IMR-90 (cell line): ENCODE measurements at regions of chr1 and their contacts with region 1.

Region 1: DNA sequence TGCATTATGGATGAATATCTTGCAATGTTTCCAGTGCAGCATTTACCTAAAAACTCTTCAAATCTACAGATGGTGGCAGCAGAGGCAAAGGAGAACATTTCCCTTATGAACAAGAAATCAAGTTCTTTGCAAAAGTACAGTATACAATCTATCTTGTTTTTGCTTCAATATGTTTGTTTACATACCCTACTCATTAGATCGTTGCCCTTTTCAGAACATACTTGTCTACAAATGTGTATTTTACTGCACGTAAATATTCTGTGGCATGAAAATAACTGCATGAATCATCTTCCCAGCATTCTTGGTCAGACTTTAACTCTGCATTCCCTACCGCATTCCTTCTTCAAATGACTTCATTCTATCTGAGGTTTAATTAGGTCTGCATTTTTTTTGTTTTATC is 212.7 kb downstream of the ZP4 start:
- DNase-seq: peak; percentile 83
- ATAC-seq: peak; percentile 92
- H3K4me3 ChIP-seq: no peak overlapping the region
- H3K27ac ChIP-seq: no peak overlapping the region
- H3K4me1 ChIP-seq: peaks cover 4% of the 10 kb centered on the region
- H3K27me3 ChIP-seq: no peaks in the 10 kb centered on the region
- CTCF ChIP-seq: peak; percentile 52
- POLR2A ChIP-seq: no peak
- RAD21 ChIP-seq: peak; percentile 53

Region 2: DNA sequence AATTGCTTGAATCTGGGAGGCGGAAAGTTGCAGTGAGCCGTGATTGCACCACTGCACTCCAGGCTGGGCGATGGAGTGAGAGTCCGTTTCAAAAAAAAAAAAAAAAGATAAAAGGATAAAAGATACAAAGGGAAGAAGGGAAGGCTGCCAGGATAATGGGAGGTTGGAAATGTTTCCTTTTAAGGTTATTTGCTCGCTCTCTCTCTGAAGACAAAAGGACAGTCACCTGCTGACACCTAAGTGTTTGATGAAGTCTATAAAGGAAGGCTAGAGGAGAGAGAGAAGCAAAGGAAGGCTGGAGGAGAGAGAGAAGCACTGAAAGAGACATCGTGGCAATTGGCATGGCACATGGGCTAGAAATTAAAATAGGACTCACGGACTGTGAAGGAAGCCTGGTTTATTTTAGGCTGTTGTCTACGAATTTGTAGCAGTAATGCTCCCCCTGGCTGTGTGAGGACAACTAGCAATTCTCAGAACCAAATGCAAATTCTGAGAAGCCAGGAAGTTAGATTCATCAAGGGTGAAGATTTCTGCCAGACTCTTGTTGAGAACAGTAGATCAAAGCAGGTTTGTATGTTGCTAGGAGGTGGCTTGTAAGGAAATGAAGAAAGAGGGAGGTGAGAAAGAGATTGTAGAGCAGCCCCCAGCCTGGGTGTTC is 58.5 kb after region 1 on chr1:
- CTCF ChIA-PET with region 1: no interaction called
- POLR2A ChIA-PET with region 1: no interaction called
- dilution Hi-C with region 1: no loop called
- in situ Hi-C with region 1: no loop called
- intact Hi-C with region 1: loop called (anchors 1 kb)
- DNase-seq: peak; percentile 1
- ATAC-seq: no peak
- H3K4me3 ChIP-seq: no peak overlapping the region
- H3K27ac ChIP-seq: no peak overlapping the region
- H3K4me1 ChIP-seq: no peaks in the 10 kb centered on the region
- H3K27me3 ChIP-seq: no peaks in the 10 kb centered on the region
- CTCF ChIP-seq: no peak
- POLR2A ChIP-seq: no peak
- RAD21 ChIP-seq: no peak

Region 3: DNA sequence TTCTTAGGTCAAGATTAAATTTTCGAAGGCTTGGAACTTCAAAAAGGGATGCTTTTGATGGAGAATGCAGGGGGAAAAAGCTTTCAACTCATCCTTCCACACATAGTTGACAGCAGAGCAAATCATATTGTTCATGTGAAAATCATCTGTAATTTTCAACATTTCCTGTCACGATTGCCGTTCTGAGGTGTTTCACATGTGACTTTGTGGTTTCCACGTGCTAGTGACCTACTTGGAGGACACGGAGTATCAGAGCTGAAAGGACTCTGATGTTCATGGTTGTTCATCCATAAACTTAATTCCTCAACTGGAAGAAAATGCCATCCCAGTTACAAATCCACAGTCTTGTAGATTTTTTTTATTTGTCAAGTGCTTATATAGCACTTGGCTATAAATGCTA is 133.7 kb after region 1 on chr1:
- CTCF ChIA-PET with region 1: interaction called, 7 read pairs
- POLR2A ChIA-PET with region 1: no interaction called
- dilution Hi-C with region 1: no loop called
- in situ Hi-C with region 1: no loop called
- intact Hi-C with region 1: loop called (anchors 1 kb)
- DNase-seq: no peak
- ATAC-seq: no peak
- H3K4me3 ChIP-seq: no peak overlapping the region
- H3K27ac ChIP-seq: no peak overlapping the region
- H3K4me1 ChIP-seq: no peaks in the 10 kb centered on the region
- H3K27me3 ChIP-seq: no peaks in the 10 kb centered on the region
- CTCF ChIP-seq: no peak
- POLR2A ChIP-seq: no peak
- RAD21 ChIP-seq: no peak

Region 4: GRCh38 chr1:238653693-238654321 is 975.8 kb after region 1 on chr1:
- CTCF ChIA-PET with region 1: no interaction called
- POLR2A ChIA-PET with region 1: no interaction called
- dilution Hi-C with region 1: no loop called
- in situ Hi-C with region 1: no loop called
- intact Hi-C with region 1: loop called (anchors 10 kb)
- DNase-seq: peak; percentile 77
- ATAC-seq: peak; percentile 78
- H3K4me3 ChIP-seq: no peak overlapping the region
- H3K27ac ChIP-seq: no peak overlapping the region
- H3K4me1 ChIP-seq: peaks cover 3% of the 10 kb centered on the region
- H3K27me3 ChIP-seq: no peaks in the 10 kb centered on the region
- CTCF ChIP-seq: no peak
- POLR2A ChIP-seq: no peak
- RAD21 ChIP-seq: no peak